ENCODE measurements at regions of chr17 and their contacts with region 1.

Region 1: DNA sequence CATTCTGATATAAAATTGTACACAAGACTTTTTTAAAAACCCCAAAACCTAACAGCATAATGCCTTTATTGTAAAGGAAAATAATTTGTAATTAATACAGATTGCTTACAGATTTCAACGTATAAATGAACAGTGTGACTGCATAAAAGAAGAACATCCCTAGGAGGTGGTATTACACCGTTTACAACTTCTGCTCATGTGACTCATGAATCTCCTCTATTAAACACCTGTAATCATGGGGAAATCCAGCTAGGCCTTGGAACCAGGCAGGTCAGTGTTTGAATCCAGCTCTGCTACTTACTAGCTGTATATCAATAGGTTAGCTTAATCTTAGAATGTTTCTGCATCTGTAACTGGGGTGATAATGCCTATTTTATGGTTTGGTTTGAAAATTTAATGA is 15.2 kb downstream of the RABEP1 start:
- DNase-seq: no peak
- H3K4me3 ChIP-seq: no peak overlapping the region
- H3K27ac ChIP-seq: no peak overlapping the region
- H3K4me1 ChIP-seq: no peaks in the 10 kb centered on the region
- H3K27me3 ChIP-seq: no peaks in the 10 kb centered on the region
- CTCF ChIP-seq: no peak
- POLR2A ChIP-seq: no peak

Region 2: DNA sequence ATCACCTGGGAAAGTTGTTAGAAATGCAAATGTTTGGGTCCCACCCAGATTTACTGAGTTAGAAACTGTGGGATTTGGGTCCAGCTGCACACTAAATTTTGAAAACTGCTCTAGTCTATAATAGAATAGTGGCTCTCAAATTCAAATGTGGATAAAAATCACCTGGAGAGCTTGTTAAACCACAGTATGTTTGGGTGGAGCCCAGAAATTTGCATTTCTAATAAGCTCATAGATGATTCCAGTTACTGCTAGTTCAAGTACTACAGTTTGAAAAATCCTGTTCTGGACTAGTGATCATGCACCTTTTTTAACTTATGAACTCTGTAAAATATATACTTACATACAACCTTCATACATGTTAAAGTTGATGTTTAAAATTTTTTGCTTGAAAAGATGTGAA is 12.6 kb after region 1 on chr17:
- CTCF ChIA-PET with region 1: interaction called, 7 read pairs
- POLR2A ChIA-PET with region 1: interaction called, 11 read pairs
- dilution Hi-C with region 1: no loop called
- intact Hi-C with region 1: no loop called
- DNase-seq: no peak
- H3K4me3 ChIP-seq: no peak overlapping the region
- H3K27ac ChIP-seq: no peak overlapping the region
- H3K4me1 ChIP-seq: no peaks in the 10 kb centered on the region
- H3K27me3 ChIP-seq: no peaks in the 10 kb centered on the region
- CTCF ChIP-seq: no peak
- POLR2A ChIP-seq: no peak

Region 3: DNA sequence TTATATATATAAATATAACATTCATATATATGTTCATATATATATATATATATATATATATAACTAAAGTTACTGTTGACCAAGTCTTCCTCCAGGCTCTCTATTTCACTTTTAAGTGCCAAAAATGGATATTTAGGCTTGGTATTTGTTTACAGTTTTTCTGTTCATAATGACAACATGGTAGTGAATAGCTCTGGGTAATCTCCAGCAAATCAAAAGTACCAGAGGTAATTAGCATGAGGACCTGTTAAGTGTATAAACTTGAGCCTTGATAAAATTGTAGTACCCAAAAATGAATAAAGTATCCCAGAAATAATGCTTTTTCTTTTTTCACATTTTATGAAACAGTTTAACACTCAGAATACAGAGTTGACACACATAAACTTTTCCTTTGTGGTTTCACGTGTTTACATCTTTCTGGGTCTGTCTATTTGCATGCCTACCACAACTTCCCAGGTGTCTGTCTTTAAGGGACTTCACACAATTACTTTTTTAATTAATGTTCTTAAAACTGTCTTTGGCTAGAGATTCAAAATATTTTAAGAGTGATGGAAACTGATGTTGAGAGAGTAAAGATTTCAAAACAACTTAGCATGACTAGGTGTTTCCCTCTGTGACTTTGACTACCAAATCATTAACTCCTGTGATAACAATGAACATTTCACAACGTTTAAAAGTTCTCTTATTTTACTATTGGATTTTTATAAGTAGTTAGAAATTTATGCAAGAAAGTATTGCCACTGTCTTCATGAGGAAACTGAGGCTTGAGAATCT is 32.7 kb after region 1 on chr17:
- CTCF ChIA-PET with region 1: no interaction called
- POLR2A ChIA-PET with region 1: no interaction called
- dilution Hi-C with region 1: no loop called
- intact Hi-C with region 1: no loop called
- DNase-seq: no peak
- H3K4me3 ChIP-seq: no peak overlapping the region
- H3K27ac ChIP-seq: no peak overlapping the region
- H3K4me1 ChIP-seq: peaks cover 13% of the 10 kb centered on the region
- H3K27me3 ChIP-seq: no peaks in the 10 kb centered on the region
- CTCF ChIP-seq: no peak
- POLR2A ChIP-seq: no peak

Measured in endothelial cell of umbilical vein (primary cell).